ENCODE measurements at regions of chr1 and their contacts with region 1.

Region 1: GRCh38 chr1:26279456-26280332 is at the start of gene SH3BGRL3:
- DNase-seq: peak; percentile 64 to 92 (median 85)
- ATAC-seq: peak; percentile 57
- H3K4me3 ChIP-seq: peak within 1 kb of the TSS; percentile 74 to 93
- H3K4me3 Mint-ChIP-seq: peak within 1 kb of the TSS; percentile 89
- H3K27ac ChIP-seq: peak within 1 kb of the TSS; percentile 69 to 90
- H3K27ac Mint-ChIP-seq: peak within 1 kb of the TSS; percentile 100
- H3K4me1 ChIP-seq: peaks cover 86% of the 10 kb centered on the region
- H3K4me1 Mint-ChIP-seq: peaks cover 86% of the 10 kb centered on the region
- H3K27me3 ChIP-seq: no peaks in the 10 kb centered on the region
- H3K27me3 Mint-ChIP-seq: no peaks in the 10 kb centered on the region
- CTCF ChIP-seq: no peak
- total RNA-seq, gene SH3BGRL3: 187 to 191 TPM

Region 2: DNA sequence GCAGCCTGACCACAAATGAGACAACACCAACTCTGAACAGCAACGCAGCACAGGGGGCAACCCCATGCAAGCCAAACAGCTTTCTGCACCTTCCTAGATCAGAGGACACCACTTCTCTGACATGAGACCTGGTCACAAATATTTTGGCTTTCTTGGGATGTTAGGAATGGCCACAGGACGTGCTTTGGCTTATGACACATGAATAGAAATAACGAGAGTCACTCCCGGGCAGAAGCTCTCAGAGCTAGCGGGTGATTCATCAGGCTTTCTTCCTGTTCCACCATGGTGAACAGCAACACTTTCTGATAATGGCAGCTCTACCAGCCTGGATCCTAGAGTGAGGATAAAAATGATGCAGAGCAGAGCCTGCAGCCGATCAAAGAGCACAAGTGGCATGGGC is 321.2 kb before region 1 on chr1:
- CTCF ChIA-PET with region 1: no interaction called
- POLR2A ChIA-PET with region 1: no interaction called
- intact Hi-C with region 1: no loop called
- DNase-seq: no peak
- ATAC-seq: no peak
- H3K4me3 ChIP-seq: no peak overlapping the region
- H3K4me3 Mint-ChIP-seq: no peak overlapping the region
- H3K27ac ChIP-seq: no peak overlapping the region
- H3K27ac Mint-ChIP-seq: no peak overlapping the region
- H3K4me1 ChIP-seq: no peaks in the 10 kb centered on the region
- H3K4me1 Mint-ChIP-seq: peaks cover 6% of the 10 kb centered on the region
- H3K27me3 ChIP-seq: no peaks in the 10 kb centered on the region
- H3K27me3 Mint-ChIP-seq: no peaks in the 10 kb centered on the region
- CTCF ChIP-seq: no peak

Region 3: DNA sequence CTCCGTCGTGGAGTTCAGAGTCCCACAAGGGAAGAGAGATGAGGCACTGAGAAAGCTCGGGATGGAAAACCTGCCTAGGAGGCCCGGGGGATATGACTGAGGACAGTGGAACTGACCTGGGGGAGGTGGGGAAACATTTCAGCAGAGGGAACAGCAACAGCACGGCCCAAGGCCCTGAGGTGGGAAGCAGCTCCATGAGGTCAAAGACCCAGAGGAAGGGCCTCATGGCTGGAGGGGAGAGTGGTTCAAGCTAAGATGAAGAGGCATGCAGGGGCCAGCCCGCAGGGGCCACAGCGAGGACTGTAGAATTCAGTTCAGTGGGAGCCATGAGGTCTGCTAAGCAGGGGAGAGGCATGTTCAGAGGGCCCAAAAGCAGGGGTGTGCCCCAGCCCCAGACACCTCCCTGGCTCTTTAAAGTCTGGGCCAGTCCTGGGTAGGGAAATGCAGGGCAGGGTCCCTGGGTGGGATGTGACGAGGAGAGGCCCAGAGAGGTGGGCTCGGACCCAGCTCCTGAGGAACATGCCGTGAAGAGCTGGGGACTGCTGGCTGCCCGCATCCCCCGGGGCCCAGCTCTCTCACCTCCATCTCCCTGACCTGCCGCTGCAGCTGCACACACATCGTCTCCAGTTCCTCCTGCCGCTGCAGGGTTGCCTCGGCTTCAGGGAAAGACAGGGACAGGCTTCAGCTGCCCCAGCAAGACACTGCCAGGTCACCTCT is 16.8 kb after region 1 on chr1:
- CTCF ChIA-PET with region 1: interaction called, 11 read pairs
- POLR2A ChIA-PET with region 1: interaction called, 9 read pairs
- intact Hi-C with region 1: no loop called
- DNase-seq: no peak
- ATAC-seq: no peak
- H3K4me3 ChIP-seq: no peak overlapping the region
- H3K4me3 Mint-ChIP-seq: no peak overlapping the region
- H3K27ac ChIP-seq: no peak overlapping the region
- H3K27ac Mint-ChIP-seq: no peak overlapping the region
- H3K4me1 ChIP-seq: peaks cover 16% of the 10 kb centered on the region
- H3K4me1 Mint-ChIP-seq: peaks cover 29% of the 10 kb centered on the region
- H3K27me3 ChIP-seq: no peaks in the 10 kb centered on the region
- H3K27me3 Mint-ChIP-seq: no peaks in the 10 kb centered on the region
- CTCF ChIP-seq: no peak

Region 4: GRCh38 chr1:26363549-26364448 is 84.1 kb after region 1 on chr1:
- CTCF ChIA-PET with region 1: interaction called, 106 read pairs
- POLR2A ChIA-PET with region 1: interaction called, 5 read pairs
- intact Hi-C with region 1: loop called (anchors 1 to 2 kb)
- DNase-seq: peak; percentile 69 to 94 (median 86)
- ATAC-seq: peak; percentile 56
- H3K4me3 ChIP-seq: no peak overlapping the region
- H3K4me3 Mint-ChIP-seq: no peak overlapping the region
- H3K27ac ChIP-seq: no peak overlapping the region
- H3K27ac Mint-ChIP-seq: peak overlapping the region; percentile 66
- H3K4me1 ChIP-seq: peaks cover 56% of the 10 kb centered on the region
- H3K4me1 Mint-ChIP-seq: peaks cover 54% of the 10 kb centered on the region
- H3K27me3 ChIP-seq: peaks cover 0 to 16% of the 10 kb centered on the region in 2 experiments
- H3K27me3 Mint-ChIP-seq: peaks cover 13% of the 10 kb centered on the region
- CTCF ChIP-seq: peak; percentile 97

Region 5: GRCh38 chr1:26391450-26391849 is 111.8 kb after region 1 on chr1:
- CTCF ChIA-PET with region 1: interaction called, 36 read pairs
- POLR2A ChIA-PET with region 1: no interaction called
- intact Hi-C with region 1: loop called in 1 of 2 experiments (anchors 1 kb)
- DNase-seq: peak in 7 of 9 experiments; percentile 32 to 80 (median 51)
- ATAC-seq: peak; percentile 72
- H3K4me3 ChIP-seq: no peak overlapping the region
- H3K4me3 Mint-ChIP-seq: no peak overlapping the region
- H3K27ac ChIP-seq: no peak overlapping the region
- H3K27ac Mint-ChIP-seq: no peak overlapping the region
- H3K4me1 ChIP-seq: peaks cover 27% of the 10 kb centered on the region
- H3K4me1 Mint-ChIP-seq: peaks cover 30% of the 10 kb centered on the region
- H3K27me3 ChIP-seq: peaks cover 0 to 6% of the 10 kb centered on the region in 2 experiments
- H3K27me3 Mint-ChIP-seq: no peaks in the 10 kb centered on the region
- CTCF ChIP-seq: peak; percentile 44

Region 6: GRCh38 chr1:26472901-26473845 is 193.5 kb after region 1 on chr1:
- CTCF ChIA-PET with region 1: interaction called, 3 read pairs
- POLR2A ChIA-PET with region 1: interaction called, 3 read pairs
- intact Hi-C with region 1: loop called in 1 of 2 experiments (anchors 5 kb)
- DNase-seq: peak; percentile 94 to 99 (median 98)
- ATAC-seq: peak; percentile 86
- H3K4me3 ChIP-seq: peak overlapping the region; percentile 48 to 72
- H3K4me3 Mint-ChIP-seq: peak overlapping the region; percentile 85
- H3K27ac ChIP-seq: peak overlapping the region; percentile 93 to 94
- H3K27ac Mint-ChIP-seq: peak overlapping the region; percentile 78
- H3K4me1 ChIP-seq: peaks cover 32% of the 10 kb centered on the region
- H3K4me1 Mint-ChIP-seq: peaks cover 51% of the 10 kb centered on the region
- H3K27me3 ChIP-seq: no peaks in the 10 kb centered on the region
- H3K27me3 Mint-ChIP-seq: no peaks in the 10 kb centered on the region
- CTCF ChIP-seq: no peak